AG04449 (cell line): ENCODE measurements at regions of chr12 and their contacts with region 1.

Region 1: DNA sequence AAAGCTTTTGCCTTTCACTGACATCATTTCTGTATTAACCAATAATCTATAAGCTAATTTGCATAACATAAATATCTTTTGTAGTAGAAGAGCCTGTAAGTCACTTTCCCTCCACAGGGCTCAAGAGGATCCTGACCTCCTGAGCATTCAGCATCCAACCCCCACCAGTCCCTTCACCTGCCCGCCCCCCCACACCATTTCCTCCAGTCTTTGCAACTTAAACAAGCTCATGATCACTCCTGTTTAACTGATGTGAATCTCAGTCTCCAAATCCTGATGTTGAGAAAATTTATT is 12.0 kb upstream of the CRY1 start:
- DNase-seq: no peak
- H3K4me3 ChIP-seq: no peak overlapping the region
- CTCF ChIP-seq: no peak

Region 2: GRCh38 chr12:106814714-106815113 is 290.6 kb before region 1 on chr12:
- CTCF ChIA-PET with region 1: no interaction called
- POLR2A ChIA-PET with region 1: no interaction called
- DNase-seq: no peak
- H3K4me3 ChIP-seq: no peak overlapping the region
- CTCF ChIP-seq: no peak

Region 3: DNA sequence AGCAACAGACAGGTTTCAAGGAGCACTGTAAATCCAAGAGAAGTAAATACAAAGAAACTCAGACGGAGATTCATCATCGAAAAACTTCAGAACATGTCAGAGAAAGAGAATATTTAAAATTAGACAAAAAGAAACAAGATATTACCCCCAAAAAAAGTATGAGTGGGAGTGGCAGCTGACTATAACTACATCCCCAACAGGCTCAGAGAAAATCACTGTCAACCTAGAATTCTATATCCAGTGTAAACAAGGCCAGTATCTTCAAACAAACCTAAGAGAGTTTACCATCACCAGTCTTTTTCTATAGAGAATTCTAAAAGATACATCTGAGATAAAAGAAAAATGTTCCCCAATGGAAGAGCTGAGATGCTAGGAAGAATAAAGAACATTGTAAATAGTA is 51.6 kb before region 1 on chr12:
- CTCF ChIA-PET with region 1: no interaction called
- POLR2A ChIA-PET with region 1: no interaction called
- DNase-seq: no peak
- H3K4me3 ChIP-seq: no peak overlapping the region
- CTCF ChIP-seq: no peak

Region 4: DNA sequence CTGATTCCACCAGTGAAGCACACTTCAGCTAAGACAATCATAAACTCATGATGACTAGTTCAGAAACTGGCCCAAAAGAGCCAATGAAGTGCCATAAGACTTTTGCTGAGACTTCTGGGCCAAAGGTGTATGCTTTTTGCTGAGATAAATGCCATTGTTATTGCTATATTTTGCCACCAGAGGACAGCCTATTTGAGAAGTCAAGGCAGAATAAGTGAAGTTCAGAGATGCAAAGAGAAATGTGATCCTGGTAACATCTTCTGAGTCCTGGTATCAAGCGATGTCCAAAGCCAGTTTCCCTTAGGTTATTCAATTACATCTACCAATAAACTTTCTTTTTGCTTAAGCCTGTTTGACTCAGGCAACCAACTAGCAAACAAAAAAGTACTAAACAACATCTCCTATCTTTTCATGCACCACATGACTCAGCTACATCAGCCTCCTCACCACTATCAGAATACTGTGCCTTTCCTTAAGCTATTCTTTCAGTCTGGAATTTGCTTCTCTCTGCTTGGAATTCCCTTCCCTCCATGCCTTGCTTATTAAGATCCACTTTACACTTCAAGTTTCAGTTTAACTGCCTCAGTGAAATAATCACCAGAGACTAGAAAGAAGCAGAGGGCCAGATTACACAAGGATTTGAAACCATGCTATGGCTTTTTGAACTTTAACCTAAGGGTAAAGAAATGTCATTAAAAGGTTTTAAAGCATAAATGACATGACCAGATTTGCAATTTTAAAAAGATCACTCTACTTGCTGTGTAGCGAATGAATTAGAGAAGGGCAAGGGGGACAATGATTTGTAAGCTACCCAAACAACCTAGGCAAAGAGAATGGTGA is 26.0 kb before region 1 on chr12:
- CTCF ChIA-PET with region 1: interaction called, 13 read pairs
- POLR2A ChIA-PET with region 1: no interaction called
- DNase-seq: no peak
- H3K4me3 ChIP-seq: no peak overlapping the region
- CTCF ChIP-seq: peak; percentile 42

Region 5: DNA sequence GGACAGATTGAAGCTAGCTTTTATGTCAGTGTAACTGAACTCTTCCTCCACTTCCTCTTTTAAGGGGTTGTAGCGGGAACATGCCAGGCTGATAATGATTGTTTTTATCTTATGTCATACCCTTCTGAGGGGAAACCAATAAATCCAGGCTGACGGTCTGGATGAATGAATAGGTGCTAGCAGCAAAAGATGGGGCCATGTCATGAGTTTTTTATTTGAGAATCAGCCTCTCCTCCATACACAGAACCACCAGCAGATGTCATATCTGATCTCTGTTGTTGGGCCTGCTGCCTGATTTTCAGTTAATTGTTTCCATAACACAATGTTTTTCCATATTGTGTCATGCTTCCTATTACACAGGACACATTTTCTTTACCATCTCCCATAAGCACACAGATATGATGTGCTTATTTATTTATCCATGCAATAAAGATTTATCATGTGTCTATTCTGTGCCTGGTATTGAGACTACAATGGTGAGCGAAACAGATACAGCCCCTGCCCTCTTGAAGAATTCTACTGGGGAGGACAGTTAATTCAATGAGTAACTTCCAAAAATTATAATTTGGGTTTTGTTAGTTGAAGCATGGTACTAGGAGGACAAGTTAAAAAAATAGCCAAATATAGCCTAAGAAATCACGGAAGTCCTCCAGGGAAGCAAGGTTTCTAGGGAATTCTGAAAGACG is 21.6 kb after region 1 on chr12:
- CTCF ChIA-PET with region 1: interaction called, 81 read pairs
- POLR2A ChIA-PET with region 1: no interaction called
- DNase-seq: no peak
- H3K4me3 ChIP-seq: no peak overlapping the region
- CTCF ChIP-seq: peak; percentile 44

Region 6: DNA sequence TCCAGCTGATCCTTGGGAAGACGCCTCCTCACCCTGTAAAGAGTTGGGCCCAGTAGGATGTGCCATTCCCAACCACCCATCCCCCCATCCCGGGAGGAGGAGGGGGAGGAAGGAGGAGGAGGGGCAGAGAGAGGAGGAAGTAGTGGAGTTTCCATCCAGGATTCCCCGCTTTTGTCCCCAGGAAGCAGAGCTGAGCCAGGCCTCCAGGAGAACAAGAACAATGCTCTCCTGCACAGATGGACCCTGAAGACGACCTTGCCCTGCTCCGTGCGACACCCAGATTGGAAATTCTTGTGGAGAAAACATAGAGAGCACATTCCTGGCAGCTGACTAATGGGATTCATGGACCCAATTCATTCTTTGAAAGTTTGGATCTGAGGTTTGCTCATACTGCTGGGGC is 120.3 kb after region 1 on chr12:
- CTCF ChIA-PET with region 1: no interaction called
- POLR2A ChIA-PET with region 1: no interaction called
- DNase-seq: no peak
- H3K4me3 ChIP-seq: no peak overlapping the region
- CTCF ChIP-seq: no peak